Naive thymus-derived CD4-positive, alpha-beta T cell (primary cell): ENCODE measurements at regions of chr7 and their contacts with region 1.

Region 1: DNA sequence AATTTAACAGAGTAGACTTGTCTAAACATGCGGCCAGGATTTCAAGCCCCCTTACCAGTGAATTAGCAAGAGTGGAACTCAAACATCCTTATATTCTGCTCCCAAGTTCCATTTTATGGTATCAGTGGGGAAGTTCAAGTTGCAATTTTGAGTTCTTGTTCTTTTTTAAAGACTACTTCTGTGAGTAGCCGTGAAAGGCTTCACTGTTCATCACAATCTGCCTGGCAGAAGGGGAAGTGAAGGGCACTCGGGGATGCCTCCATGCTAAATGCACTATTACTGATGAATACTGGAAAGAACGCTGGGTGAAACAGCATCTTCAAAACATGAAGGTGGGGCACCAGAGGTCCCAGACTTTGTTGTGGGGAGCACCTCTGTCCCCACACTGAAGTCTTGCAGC is 22.4 kb upstream of the FGL2 start:
- DNase-seq: no peak
- ATAC-seq: peak; percentile 46
- H3K4me3 ChIP-seq: no peak overlapping the region
- H3K4me3 Mint-ChIP-seq: peak overlapping the region in 5 of 10 donors; percentile 1 to 29 (median 4)
- H3K27ac ChIP-seq: no peak overlapping the region
- H3K27ac Mint-ChIP-seq: peak overlapping the region in 4 of 9 donors; percentile 27 to 80 (median 57)
- H3K4me1 ChIP-seq: peaks cover 0 to 18% of the 10 kb centered on the region in 2 donors
- H3K4me1 Mint-ChIP-seq: peaks cover 15 to 36% (median 24%) of the 10 kb centered on the region in 7 donors
- H3K27me3 ChIP-seq: no peaks in the 10 kb centered on the region
- H3K27me3 Mint-ChIP-seq: no peaks in the 10 kb centered on the region

Region 2: DNA sequence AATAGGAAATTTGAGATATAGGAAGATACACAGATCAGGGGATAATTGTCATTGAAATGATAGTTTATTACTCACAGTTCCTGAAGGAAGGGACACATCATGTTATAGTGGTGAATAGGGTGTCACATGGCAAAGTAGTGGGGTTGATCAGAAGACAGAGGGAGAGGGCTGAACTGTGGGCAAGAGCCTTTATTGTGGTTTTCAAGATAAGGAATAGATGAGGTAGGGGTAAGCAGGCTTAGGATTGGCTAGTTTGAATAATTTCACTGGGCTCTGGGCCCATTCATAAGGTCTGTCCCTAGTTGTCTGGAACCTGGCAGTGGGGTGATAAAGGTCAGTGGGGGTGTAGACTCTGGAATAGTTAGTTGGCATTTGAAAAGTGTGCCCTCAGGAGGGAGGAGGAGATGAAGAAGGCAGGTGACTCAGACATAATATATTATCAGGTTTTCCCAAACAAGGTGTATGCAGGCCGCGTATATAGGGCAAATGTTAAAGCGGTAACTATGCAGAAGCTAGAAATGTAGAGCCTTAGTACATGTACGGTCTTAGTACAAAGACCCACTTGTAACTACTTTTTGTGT is 41.0 kb before region 1 on chr7:
- CTCF ChIA-PET with region 1: no interaction called
- POLR2A ChIA-PET with region 1: no interaction called
- intact Hi-C with region 1: no loop called
- DNase-seq: no peak
- ATAC-seq: no peak
- H3K4me3 ChIP-seq: no peak overlapping the region
- H3K4me3 Mint-ChIP-seq: no peak overlapping the region
- H3K27ac ChIP-seq: no peak overlapping the region
- H3K27ac Mint-ChIP-seq: no peak overlapping the region
- H3K4me1 ChIP-seq: no peaks in the 10 kb centered on the region
- H3K4me1 Mint-ChIP-seq: no peaks in the 10 kb centered on the region
- H3K27me3 ChIP-seq: no peaks in the 10 kb centered on the region
- H3K27me3 Mint-ChIP-seq: no peaks in the 10 kb centered on the region

Region 3: GRCh38 chr7:77205706-77206105 is 16.4 kb before region 1 on chr7:
- CTCF ChIA-PET with region 1: no interaction called
- POLR2A ChIA-PET with region 1: interaction called, 4 read pairs
- intact Hi-C with region 1: loop called in 1 of 2 experiments (anchors 2 kb)
- DNase-seq: no peak
- ATAC-seq: no peak
- H3K4me3 ChIP-seq: no peak overlapping the region
- H3K4me3 Mint-ChIP-seq: no peak overlapping the region
- H3K27ac ChIP-seq: no peak overlapping the region
- H3K27ac Mint-ChIP-seq: no peak overlapping the region
- H3K4me1 ChIP-seq: peaks cover 0 to 3% of the 10 kb centered on the region in 2 donors
- H3K4me1 Mint-ChIP-seq: peaks cover 4 to 12% (median 8%) of the 10 kb centered on the region in 7 donors
- H3K27me3 ChIP-seq: no peaks in the 10 kb centered on the region
- H3K27me3 Mint-ChIP-seq: no peaks in the 10 kb centered on the region